ENCODE measurements at regions of chr1 and their contacts with region 1.

Region 1: GRCh38 chr1:24586970-24587820 is 31.3 kb downstream of the NCMAP start:
- DNase-seq: peak; percentile 73
- H3K4me3 ChIP-seq: no peak overlapping the region; a peak in 1 of 4 replicates
- H3K27ac ChIP-seq: no peak overlapping the region
- H3K4me1 ChIP-seq: no peaks in the 10 kb centered on the region
- H3K27me3 ChIP-seq: no peaks in the 10 kb centered on the region
- CTCF ChIP-seq: peak; percentile 81
- EP300 ChIP-seq: no peak
- RAD21 ChIP-seq: peak; percentile 68

Region 2: DNA sequence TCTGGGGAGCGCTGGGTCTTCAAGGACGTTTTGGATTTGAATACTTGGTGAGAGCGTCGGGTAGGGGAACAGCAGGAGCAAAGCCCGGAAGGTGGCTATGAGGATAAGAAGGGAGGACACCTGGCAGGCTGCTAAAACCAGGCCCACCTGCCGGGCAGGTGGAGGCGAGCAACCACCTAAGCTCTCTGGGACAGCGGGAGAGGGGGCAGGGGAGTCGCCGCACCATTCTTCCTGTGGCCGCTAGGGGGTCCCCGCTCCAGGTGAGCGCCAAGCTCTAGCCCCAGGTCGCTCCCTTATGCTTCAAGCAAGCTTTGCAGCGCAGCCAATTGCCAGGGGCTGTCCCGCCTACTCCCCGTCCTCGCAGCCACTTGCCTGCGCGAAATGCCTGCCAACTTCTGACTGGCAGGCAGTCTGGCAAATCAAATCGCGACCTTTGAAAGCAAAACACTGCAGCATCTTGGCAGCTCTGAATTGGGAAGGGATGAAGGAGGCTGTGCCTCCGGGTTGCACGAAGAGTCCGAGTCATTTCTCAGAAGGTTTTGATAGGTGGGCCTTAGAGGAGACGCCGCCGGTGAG is 171.8 kb before region 1 on chr1 and contains the start of gene NIPAL3:
- CTCF ChIA-PET with region 1: interaction called, 24 read pairs
- POLR2A ChIA-PET with region 1: no interaction called
- DNase-seq: peak; percentile 91
- H3K4me3 ChIP-seq: peak within 1 kb of the TSS; percentile 66 to 91
- H3K27ac ChIP-seq: peak within 1 kb of the TSS in 1 of 2 experiments; percentile 82; a peak in 3 of 4 replicates
- H3K4me1 ChIP-seq: peaks cover 17 to 39% of the 10 kb centered on the region in 2 experiments
- H3K27me3 ChIP-seq: no peaks in the 10 kb centered on the region
- CTCF ChIP-seq: peak; percentile 66
- EP300 ChIP-seq: no peak
- RAD21 ChIP-seq: peak; percentile 58
- polyA plus RNA-seq, gene NIPAL3: 20.3 and 28.6 TPM in 2 replicates

Region 3: GRCh38 chr1:24541711-24542346 is 45.4 kb before region 1 on chr1:
- CTCF ChIA-PET with region 1: interaction called, 28 read pairs
- POLR2A ChIA-PET with region 1: no interaction called
- DNase-seq: peak; percentile 46
- H3K4me3 ChIP-seq: no peak overlapping the region; a peak in 1 of 4 replicates
- H3K27ac ChIP-seq: no peak overlapping the region
- H3K4me1 ChIP-seq: no peaks in the 10 kb centered on the region
- H3K27me3 ChIP-seq: no peaks in the 10 kb centered on the region
- CTCF ChIP-seq: peak; percentile 73
- EP300 ChIP-seq: no peak
- RAD21 ChIP-seq: peak; percentile 63

Region 4: DNA sequence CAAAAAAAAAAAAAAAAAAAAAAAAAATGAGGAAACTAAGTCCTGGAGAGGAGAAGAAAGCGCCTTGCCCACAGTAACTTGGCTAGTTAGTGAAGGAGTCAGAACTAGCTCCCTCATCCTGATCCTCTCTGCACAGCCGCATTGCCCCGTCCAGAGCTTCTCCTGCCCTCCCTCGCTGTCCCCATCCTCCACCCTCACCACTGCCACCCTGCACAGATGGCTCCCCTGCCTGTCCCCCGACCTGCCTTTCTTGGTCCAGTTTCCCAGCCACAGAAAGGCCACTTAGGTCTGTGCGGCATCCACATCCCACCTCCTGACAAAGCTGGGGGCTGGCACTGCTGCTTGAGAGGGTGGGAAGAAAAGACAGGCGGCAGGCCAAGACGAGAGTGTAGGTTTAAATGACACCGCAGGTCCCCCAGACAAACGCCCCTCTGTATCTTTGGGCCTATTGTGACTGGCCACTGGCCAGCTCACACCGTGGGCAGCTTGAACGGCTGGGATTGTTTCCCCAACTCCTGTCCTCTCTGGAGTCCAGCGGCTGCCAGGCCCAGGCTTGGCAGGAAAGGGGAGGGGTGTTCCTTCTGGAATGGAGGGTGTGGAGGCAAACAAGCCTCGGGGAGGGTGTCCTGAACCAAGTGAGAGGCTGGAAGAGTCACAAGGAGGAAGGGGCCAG is 11.1 kb before region 1 on chr1:
- CTCF ChIA-PET with region 1: interaction called, 17 read pairs
- POLR2A ChIA-PET with region 1: no interaction called
- DNase-seq: no peak
- H3K4me3 ChIP-seq: no peak overlapping the region
- H3K27ac ChIP-seq: no peak overlapping the region
- H3K4me1 ChIP-seq: no peaks in the 10 kb centered on the region; a peak in 1 of 4 replicates
- H3K27me3 ChIP-seq: no peaks in the 10 kb centered on the region
- CTCF ChIP-seq: no peak
- EP300 ChIP-seq: no peak
- RAD21 ChIP-seq: no peak

Region 5: DNA sequence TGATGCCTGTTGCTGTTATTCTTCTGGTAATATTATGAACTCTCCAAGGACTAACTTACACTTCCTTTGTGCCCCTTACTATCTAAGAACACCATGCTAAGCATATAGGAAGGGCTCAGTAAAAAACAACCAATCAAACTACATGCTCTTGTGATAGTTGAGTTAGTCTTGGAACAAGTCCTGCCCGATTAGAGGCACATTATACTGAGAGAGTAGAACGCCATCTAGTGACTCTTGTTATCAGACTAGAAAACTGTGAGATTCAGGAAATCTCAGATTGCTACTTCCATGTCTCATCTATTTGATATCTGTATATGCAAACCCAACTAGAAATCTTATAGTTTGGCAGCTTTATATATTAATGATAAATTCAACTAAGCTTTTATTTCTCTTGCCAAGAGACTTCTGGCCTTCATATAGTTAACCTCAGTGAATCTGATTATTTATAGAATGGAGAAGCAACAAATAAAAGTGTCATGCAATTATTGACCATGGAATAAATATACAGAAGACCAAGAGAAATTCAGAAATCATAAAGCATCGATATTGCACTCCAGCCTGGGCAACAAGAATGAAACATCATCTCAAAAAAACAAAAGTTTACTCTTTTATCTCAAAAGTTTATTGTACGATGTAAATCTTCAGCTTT is 48.1 kb after region 1 on chr1:
- CTCF ChIA-PET with region 1: interaction called, 15 read pairs
- POLR2A ChIA-PET with region 1: no interaction called
- DNase-seq: peak; percentile 66
- H3K4me3 ChIP-seq: no peak overlapping the region
- H3K27ac ChIP-seq: no peak overlapping the region
- H3K4me1 ChIP-seq: no peaks in the 10 kb centered on the region
- H3K27me3 ChIP-seq: no peaks in the 10 kb centered on the region
- CTCF ChIP-seq: peak; percentile 76
- EP300 ChIP-seq: no peak
- RAD21 ChIP-seq: peak; percentile 86

Region 6: GRCh38 chr1:24694380-24694843 is 107.2 kb after region 1 on chr1:
- CTCF ChIA-PET with region 1: no interaction called
- POLR2A ChIA-PET with region 1: no interaction called
- DNase-seq: peak; percentile 62
- H3K4me3 ChIP-seq: no peak overlapping the region
- H3K27ac ChIP-seq: peak overlapping the region in 1 of 2 experiments; percentile 51; a peak in 1 of 4 replicates
- H3K4me1 ChIP-seq: peaks cover 0 to 24% of the 10 kb centered on the region in 2 experiments; a peak in 1 of 4 replicates
- H3K27me3 ChIP-seq: no peaks in the 10 kb centered on the region
- CTCF ChIP-seq: no peak
- EP300 ChIP-seq: peak in 1 of 2 experiments; percentile 84; a peak in 2 of 4 replicates
- RAD21 ChIP-seq: no peak

Measured in SK-N-SH (cell line).